ENCODE measurements at regions of chr16 and their contacts with region 1.

Region 1: GRCh38 chr16:57734925-57735754 is 430 bp upstream of the KATNB1 start:
- DNase-seq: peak; percentile 100
- ATAC-seq: peak; percentile 94
- H3K4me3 ChIP-seq: peak overlapping the region; percentile 70
- H3K27ac ChIP-seq: peak overlapping the region; percentile 84
- H3K4me1 ChIP-seq: peaks cover 10% of the 10 kb centered on the region
- H3K27me3 ChIP-seq: no peaks in the 10 kb centered on the region
- CTCF ChIP-seq: no peak
- POLR2A ChIP-seq: peak; percentile 59; the same call in 1 of the 2 replicates
- RAD21 ChIP-seq: no peak

Region 2: DNA sequence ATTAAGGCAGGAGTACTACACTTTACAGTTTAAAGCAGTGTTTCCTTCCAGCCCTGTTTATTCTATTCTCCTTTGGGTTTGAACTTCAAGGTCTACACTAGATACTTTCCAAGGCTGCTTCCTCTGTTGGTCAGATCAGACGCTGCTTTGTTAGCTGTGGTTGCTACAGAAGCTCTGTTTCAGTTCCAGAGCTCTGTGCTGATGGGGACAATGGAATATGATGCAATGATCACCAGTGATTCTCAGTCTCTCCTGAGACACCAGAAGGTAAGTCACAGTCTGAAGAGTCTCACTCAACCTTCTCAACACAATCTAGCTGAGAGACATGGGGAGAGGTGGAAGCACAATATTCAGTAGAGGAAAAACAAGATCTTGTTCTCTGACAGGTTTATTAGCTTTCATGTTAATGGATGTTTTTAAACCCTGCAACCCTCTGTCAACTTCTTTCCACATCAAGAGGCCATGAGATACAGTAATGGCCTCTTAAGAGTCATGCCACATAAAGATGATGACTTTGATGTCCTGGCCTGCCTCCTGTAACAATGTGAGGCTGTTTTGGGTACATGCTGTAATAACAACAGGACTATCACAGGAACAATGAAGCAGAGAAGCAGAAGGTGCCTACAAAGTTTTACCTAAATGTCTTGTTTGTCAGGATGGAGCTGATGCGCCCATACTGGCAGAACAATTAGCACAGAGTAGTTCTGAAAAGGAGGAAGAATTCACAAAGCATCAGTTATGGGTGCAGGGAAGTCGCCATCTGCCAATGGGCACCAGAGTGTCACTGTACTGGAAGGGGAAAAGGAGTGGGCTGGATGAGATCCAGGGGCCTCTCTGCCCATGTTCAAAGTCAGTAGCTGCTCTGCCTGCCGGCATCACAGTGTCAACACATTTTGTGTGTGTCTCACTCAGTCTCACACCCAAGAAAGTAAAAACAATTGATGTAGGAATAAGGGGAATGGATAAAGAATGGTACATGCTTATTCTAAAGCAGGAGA is 582.7 kb before region 1 on chr16:
- CTCF ChIA-PET with region 1: no interaction called
- POLR2A ChIA-PET with region 1: no interaction called
- dilution Hi-C with region 1: no loop called
- in situ Hi-C with region 1: no loop called
- intact Hi-C with region 1: no loop called
- DNase-seq: no peak
- ATAC-seq: no peak
- H3K4me3 ChIP-seq: no peak overlapping the region
- H3K27ac ChIP-seq: no peak overlapping the region
- H3K4me1 ChIP-seq: peaks cover 4% of the 10 kb centered on the region; the same call in 1 of the 2 replicates
- H3K27me3 ChIP-seq: no peaks in the 10 kb centered on the region
- CTCF ChIP-seq: no peak
- POLR2A ChIP-seq: no peak
- RAD21 ChIP-seq: no peak

Region 3: DNA sequence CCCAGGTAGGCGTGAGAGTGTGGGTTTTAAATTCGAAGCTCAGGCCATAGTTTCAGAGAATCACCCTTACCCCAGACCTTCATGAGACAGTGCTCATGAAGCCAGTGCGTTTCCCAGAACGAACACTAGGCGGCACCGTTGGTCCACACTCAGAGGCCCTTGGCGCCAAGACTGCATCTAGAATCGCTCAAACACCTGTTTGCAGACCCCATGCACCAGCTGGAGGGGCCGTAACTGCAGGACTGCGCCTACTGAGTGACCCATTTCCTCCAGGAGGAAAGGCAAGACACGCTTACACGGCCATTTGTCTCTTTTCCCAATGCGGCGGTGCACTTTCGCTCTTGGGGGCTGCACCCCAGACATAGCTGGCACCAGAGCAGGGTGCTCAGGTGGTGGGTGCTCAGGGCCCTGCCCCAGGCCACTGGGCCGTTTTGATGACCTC is 158.7 kb before region 1 on chr16:
- CTCF ChIA-PET with region 1: interaction called, 3 read pairs
- POLR2A ChIA-PET with region 1: no interaction called
- dilution Hi-C with region 1: no loop called
- in situ Hi-C with region 1: no loop called
- intact Hi-C with region 1: loop called (anchors 5 kb)
- DNase-seq: peak; percentile 55
- ATAC-seq: peak; percentile 98
- H3K4me3 ChIP-seq: no peak overlapping the region
- H3K27ac ChIP-seq: no peak overlapping the region
- H3K4me1 ChIP-seq: no peaks in the 10 kb centered on the region
- H3K27me3 ChIP-seq: peaks cover 19% of the 10 kb centered on the region; the same call in 1 of the 2 replicates
- CTCF ChIP-seq: peak; percentile 96
- POLR2A ChIP-seq: peak; percentile 44; the same call in 1 of the 2 replicates
- RAD21 ChIP-seq: peak; percentile 97

Region 4: DNA sequence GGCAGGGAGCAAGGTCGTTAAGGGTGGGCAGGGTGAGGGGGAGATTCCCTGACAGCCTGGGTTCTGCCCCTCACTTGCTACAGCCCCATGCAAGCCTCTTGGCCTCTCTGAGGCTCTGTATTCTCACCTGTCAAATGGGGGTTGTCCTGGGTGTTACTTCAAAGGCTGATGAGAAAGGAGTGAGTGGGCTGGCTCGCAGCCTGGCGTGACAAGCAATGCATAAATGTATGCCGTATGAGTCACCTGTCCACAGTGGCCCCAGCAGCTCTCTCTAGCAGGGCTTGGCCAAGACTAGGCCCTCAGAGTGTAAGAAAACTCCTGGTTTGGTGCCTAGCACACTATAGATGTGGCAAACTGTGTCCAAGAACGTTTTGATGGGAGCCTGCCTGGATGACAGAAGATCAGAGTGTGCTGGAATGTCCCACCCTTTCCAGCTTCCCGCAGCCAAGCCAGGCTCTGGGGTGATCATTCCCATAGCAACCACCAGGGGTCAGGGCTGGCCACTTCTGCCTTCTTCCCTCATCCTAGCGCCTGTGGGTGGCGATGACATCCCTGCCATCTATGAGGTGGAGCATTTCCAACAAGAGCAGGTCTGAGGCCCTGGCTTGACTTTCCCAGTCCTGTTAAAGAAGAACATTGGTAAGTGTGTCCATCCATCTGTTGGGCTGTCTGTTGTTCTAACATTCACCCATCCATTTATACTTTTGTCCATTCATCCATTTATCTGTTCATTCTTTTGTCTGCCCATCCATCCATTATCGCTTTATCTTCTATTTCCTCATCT is 143.9 kb before region 1 on chr16:
- CTCF ChIA-PET with region 1: interaction called, 3 read pairs
- POLR2A ChIA-PET with region 1: no interaction called
- dilution Hi-C with region 1: no loop called
- in situ Hi-C with region 1: no loop called
- intact Hi-C with region 1: loop called (anchors 5 kb)
- DNase-seq: peak; percentile 82
- ATAC-seq: peak; percentile 93
- H3K4me3 ChIP-seq: no peak overlapping the region
- H3K27ac ChIP-seq: peak overlapping the region; percentile 2; the same call in 1 of the 2 replicates
- H3K4me1 ChIP-seq: peaks cover 8% of the 10 kb centered on the region
- H3K27me3 ChIP-seq: 0 out of 2 replicates have a peak, but pooled peaks cover 3% of the 10 kb centered on the region
- CTCF ChIP-seq: peak; percentile 93
- POLR2A ChIP-seq: no peak
- RAD21 ChIP-seq: peak; percentile 83

Region 5: GRCh38 chr16:58129097-58129936 is 394.2 kb after region 1 on chr16 and contains the start of gene CFAP20:
- CTCF ChIA-PET with region 1: no interaction called
- POLR2A ChIA-PET with region 1: no interaction called
- dilution Hi-C with region 1: no loop called
- in situ Hi-C with region 1: no loop called
- intact Hi-C with region 1: loop called (anchors 5 kb)
- DNase-seq: peak; percentile 100
- ATAC-seq: peak; percentile 95
- H3K4me3 ChIP-seq: peak within 1 kb of the TSS; percentile 84
- H3K27ac ChIP-seq: peak within 1 kb of the TSS; percentile 72
- H3K4me1 ChIP-seq: peaks cover 11% of the 10 kb centered on the region
- H3K27me3 ChIP-seq: no peaks in the 10 kb centered on the region
- CTCF ChIP-seq: no peak
- POLR2A ChIP-seq: peak; percentile 92
- RAD21 ChIP-seq: no peak
- total RNA-seq, gene CFAP20: 36.4 and 39.1 TPM in 2 replicates